ENCODE measurements at regions of chr11 and their contacts with region 1.

Region 1: DNA sequence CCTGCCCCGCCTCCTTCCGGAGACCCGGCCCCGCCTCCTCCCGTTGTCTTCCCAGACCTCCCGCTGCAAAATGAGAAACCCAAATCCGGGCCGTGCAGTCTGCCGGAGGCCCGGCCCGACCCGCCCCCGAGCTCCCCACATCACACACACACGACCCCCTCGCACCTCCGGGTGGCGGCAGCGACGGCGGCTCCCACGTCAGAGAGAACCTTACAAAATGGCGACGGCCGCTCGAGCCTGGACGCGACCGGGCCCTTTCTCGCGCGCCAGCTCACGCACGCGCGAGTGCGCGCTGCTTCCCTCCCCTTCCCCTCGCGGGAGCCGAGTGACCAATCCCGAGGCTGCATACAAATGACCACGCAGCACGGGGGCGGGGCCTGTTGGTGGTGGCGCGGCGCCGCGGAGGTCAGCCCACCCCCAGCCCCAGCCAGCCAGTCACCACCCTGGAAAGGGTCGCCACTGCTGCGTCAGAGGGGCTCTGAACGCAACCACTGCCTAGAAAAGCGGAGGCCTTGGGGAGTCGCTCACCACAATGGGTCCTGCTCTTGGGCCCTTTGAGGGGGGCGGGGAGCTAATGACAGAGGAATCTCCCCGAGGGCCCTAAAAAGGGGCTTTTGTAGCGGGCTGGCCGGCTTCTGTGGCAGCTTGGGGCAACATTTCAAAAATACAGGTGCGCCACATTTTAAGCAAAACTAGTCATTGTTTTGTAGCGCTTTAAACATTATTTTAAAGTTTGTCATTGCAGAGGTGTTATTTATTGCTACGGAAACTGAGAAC is at the start of gene RBM4B:
- DNase-seq: peak; percentile 59
- H3K4me3 ChIP-seq: peak within 1 kb of the TSS; percentile 75
- CTCF ChIP-seq: no peak

Region 2: DNA sequence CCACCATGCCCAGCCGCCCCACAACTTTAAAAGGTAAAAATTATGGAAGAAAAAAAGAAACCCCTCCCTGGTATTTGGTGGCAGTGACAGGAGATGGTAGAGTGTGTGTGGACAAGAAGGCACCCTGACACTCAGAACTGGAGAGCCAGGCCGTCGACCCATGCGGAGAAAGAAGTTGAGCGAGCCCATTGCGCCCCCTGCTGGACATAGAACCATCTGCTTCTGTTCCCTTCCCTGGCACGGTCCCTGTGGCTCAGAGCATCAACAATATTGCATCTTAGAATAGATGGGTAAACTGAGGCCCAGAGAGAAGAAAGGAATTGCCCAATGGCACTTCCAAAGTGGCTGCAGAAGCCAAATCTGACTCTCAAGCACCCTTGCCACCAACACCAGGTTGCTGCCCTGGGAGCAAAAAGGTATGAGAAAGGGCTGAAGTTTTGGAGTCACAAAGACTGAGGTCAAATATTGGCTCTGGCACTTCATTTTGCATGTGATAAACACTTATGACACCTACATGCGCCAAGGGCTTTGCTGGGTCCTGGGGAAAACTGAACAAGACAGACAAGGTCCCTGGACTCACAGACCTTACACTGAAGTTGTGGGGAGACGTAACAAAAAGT is 247.7 kb before region 1 on chr11:
- CTCF ChIA-PET with region 1: interaction called, 15 read pairs
- POLR2A ChIA-PET with region 1: no interaction called
- DNase-seq: no peak
- H3K4me3 ChIP-seq: no peak overlapping the region
- CTCF ChIP-seq: peak; percentile 90

Region 3: GRCh38 chr11:66466225-66467027 is 211.4 kb before region 1 on chr11 and contains the start of gene PELI3:
- CTCF ChIA-PET with region 1: interaction called, 10 read pairs
- POLR2A ChIA-PET with region 1: interaction called, 3 read pairs
- DNase-seq: peak; percentile 41
- H3K4me3 ChIP-seq: peak within 1 kb of the TSS; percentile 69
- CTCF ChIP-seq: no peak

Region 4: DNA sequence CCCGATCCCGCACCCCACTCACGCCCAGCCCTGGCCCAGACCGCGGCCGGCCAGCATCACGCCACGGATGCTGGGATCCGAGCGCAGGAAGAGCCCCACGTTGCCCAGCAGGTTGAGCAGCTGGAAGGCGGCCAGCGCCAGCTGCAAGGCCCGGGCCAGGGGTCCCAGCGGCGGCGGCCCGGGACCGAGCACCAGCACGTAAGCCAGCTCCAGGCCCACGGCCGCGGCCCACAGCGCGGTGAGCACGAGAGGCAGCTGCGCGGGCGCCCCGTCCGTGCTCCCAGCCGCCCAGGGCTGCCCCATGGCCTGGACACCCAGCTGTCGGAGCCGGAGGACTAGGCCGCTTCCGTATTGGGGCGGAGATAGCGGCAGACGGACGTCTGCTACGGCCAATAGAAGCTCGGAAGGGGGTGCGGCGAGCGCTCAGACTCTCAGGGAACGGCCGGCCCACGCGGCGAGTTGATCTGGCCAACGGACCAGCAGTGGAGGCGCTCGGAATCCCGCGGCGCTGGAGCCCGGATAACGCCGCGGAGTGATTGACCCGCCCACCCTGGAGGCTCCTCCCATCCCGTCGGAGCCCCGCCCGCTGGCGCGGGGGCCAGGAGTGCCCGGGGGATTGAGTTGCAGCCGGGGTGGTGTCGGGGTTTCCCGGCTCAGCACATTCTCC is 132.0 kb before region 1 on chr11 and contains the start of gene ZDHHC24:
- CTCF ChIA-PET with region 1: interaction called, 9 read pairs
- POLR2A ChIA-PET with region 1: interaction called, 11 read pairs
- DNase-seq: peak; percentile 79
- H3K4me3 ChIP-seq: peak within 1 kb of the TSS; percentile 79
- CTCF ChIP-seq: no peak

Region 5: DNA sequence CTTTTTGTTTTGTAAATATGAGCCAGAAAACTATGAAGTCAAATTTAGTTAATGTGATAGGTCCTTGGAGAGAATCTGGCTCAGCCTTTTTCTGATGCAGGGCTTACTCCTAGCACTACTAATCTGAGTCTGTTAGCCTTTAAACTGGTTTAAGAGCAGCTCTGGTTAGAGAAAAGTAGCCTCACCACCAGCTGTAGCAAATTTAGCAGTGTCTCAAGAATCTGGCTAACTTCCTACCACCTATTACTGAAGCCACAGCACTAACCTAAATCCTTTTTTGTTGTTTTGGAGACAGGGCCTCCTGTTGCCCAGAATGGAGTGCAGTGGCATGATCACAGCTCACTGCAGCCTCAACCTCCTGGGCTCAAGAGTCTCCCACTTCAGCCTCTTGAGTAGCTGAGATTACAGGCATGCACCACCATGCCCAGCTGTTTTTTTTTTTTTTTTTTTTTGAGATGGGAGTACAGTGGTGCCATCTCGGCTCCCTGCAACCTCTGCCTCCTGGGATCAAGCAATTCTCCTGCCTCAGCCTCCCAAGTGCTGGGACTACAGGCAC is 14.0 kb before region 1 on chr11:
- CTCF ChIA-PET with region 1: interaction called, 12 read pairs
- POLR2A ChIA-PET with region 1: no interaction called
- DNase-seq: no peak
- H3K4me3 ChIP-seq: no peak overlapping the region
- CTCF ChIP-seq: no peak

Region 6: DNA sequence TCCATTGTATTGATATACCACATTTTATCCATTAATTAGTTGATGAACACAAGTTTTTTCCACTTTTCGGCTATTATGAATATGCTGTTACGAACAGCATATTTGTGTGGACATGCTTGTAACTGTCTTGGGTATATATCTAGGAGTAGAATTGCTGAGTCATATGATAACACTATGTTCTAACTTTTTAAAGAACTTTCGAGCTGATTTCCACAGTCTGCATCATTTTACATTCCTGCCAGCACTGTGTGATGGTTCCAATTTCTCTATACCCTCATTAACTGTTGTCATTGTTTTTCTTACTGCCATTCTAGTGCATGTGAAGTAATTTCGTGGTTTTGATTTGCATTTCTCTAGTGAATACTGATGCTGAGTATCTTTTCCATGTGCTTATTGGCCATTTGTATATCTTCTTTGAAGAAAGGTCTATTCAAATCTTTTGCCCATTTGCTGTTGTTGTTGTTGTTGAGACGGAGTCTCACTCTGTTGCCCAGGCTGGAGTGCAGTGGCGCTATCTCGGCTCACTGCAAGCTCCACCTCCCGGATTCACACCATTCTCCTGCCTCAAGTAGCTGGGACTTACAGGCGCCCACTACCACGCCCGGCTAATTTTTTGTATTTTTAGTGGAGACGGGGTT is 158.1 kb after region 1 on chr11:
- CTCF ChIA-PET with region 1: interaction called, 18 read pairs
- POLR2A ChIA-PET with region 1: no interaction called
- DNase-seq: no peak
- H3K4me3 ChIP-seq: no peak overlapping the region
- CTCF ChIP-seq: no peak